ENCODE measurements at regions of chr16 and their contacts with region 1.

Region 1: GRCh38 chr16:20704281-20704680 is 6.8 kb upstream of the ACSM1 start:
- DNase-seq: no peak
- H3K4me3 ChIP-seq: no peak overlapping the region
- H3K4me3 Mint-ChIP-seq: no peak overlapping the region
- H3K27ac Mint-ChIP-seq: no peak overlapping the region
- H3K4me1 ChIP-seq: no peaks in the 10 kb centered on the region
- H3K4me1 Mint-ChIP-seq: no peaks in the 10 kb centered on the region
- H3K27me3 ChIP-seq: no peaks in the 10 kb centered on the region
- H3K27me3 Mint-ChIP-seq: peaks cover 7% of the 10 kb centered on the region
- CTCF ChIP-seq: no peak

Region 2: GRCh38 chr16:20674684-20675487 is 29.4 kb before region 1 on chr16:
- CTCF ChIA-PET with region 1: no interaction called
- POLR2A ChIA-PET with region 1: no interaction called
- intact Hi-C with region 1: loop called (anchors 1 kb)
- DNase-seq: no peak
- H3K4me3 ChIP-seq: no peak overlapping the region
- H3K4me3 Mint-ChIP-seq: peak overlapping the region; percentile 67
- H3K27ac Mint-ChIP-seq: peak overlapping the region; percentile 89
- H3K4me1 ChIP-seq: peaks cover 44% of the 10 kb centered on the region
- H3K4me1 Mint-ChIP-seq: peaks cover 40% of the 10 kb centered on the region
- H3K27me3 ChIP-seq: no peaks in the 10 kb centered on the region
- H3K27me3 Mint-ChIP-seq: no peaks in the 10 kb centered on the region
- CTCF ChIP-seq: no peak

Measured in Caco-2 (cell line).